GM12878 (cell line): ENCODE measurements at regions of chr7 and their contacts with region 1.

Region 1: DNA sequence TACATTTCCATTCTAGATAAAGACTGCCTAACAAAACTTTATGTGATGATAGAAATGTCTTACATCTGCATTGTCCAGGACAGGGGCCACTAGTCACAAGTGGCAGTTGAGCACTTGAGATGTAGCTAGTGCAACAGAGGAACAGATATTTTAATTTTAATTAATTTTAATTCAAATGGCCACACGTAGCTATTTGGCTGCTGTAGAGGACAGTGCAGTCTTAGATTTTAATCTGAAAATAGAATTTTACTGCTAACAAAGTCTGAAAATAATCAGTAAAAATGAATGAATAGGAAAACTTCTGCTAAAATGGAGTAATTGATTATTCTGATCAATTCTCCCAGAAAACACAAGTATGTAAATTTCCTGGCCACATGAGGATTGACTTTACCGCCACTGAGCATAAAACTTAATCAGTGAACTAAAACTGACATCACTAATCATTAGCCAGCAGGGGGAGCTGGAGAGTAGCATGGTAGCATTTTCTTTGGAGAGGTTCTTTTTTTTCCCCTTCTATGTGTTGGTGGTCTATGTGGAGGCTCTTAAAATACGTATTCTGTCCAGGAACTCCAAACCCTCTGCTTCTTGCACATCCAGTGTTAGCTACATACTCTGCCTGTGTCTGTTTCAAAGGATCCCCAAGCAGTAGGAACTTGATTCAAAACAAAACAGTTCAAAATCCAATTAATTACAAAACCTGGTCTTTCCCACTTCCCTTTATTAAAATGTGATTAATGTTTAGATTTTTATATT is 52.1 kb downstream of the TSPAN12 start:
- DNase-seq: peak; percentile 53
- ATAC-seq: peak; percentile 85
- H3K4me3 ChIP-seq: no peak overlapping the region
- H3K27ac ChIP-seq: no peak overlapping the region
- H3K4me1 ChIP-seq: no peaks in the 10 kb centered on the region
- H3K27me3 ChIP-seq: no peaks in the 10 kb centered on the region
- CTCF ChIP-seq: peak; percentile 74 to 86 (median 82)
- EP300 ChIP-seq: no peak
- POLR2A ChIP-seq: no peak
- RAD21 ChIP-seq: peak; percentile 84

Region 2: GRCh38 chr7:120825576-120825975 is 19.8 kb after region 1 on chr7:
- CTCF ChIA-PET with region 1: interaction called, 25 read pairs
- POLR2A ChIA-PET with region 1: interaction called, 4 read pairs
- RAD21 ChIA-PET with region 1: interaction called, 11 read pairs
- SMC1A ChIA-PET with region 1: interaction called, 13 read pairs
- in situ Hi-C with region 1: no loop called
- intact Hi-C with region 1: loop called (anchors 2 kb)
- DNase-seq: no peak
- ATAC-seq: no peak
- H3K4me3 ChIP-seq: no peak overlapping the region
- H3K27ac ChIP-seq: no peak overlapping the region
- H3K4me1 ChIP-seq: no peaks in the 10 kb centered on the region
- H3K27me3 ChIP-seq: no peaks in the 10 kb centered on the region
- CTCF ChIP-seq: no peak
- EP300 ChIP-seq: no peak
- POLR2A ChIP-seq: no peak
- RAD21 ChIP-seq: no peak

Region 3: DNA sequence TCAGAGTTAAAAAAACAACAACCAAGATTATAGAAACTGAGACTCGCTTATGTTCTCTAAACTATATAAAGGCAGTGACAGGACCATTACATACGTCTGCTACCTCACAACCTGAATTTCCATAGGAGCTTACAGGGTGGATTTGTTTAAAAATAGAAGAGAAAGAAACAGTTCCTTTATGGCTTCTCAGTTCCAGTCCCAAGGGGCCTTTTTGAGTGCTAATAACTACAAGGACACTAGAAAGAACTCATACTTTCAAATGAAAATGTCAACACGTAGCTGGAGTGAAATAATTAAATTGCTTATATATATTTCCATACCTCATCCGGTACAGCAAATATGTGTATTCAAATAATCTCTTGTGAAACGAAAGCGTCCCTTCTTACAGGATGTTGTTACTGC is 32.5 kb after region 1 on chr7:
- CTCF ChIA-PET with region 1: interaction called, 35 read pairs
- POLR2A ChIA-PET with region 1: interaction called, 13 read pairs
- RAD21 ChIA-PET with region 1: interaction called, 21 read pairs
- SMC1A ChIA-PET with region 1: interaction called, 36 read pairs
- in situ Hi-C with region 1: no loop called
- intact Hi-C with region 1: loop called (anchors 2 kb)
- DNase-seq: peak; percentile 68
- ATAC-seq: peak; percentile 76
- H3K4me3 ChIP-seq: no peak overlapping the region
- H3K27ac ChIP-seq: peak overlapping the region; percentile 39
- H3K4me1 ChIP-seq: peaks cover 7% of the 10 kb centered on the region; the same call in 1 of the 2 replicates
- H3K27me3 ChIP-seq: no peaks in the 10 kb centered on the region
- CTCF ChIP-seq: no peak
- EP300 ChIP-seq: peak; percentile 55 to 56; a peak in 3 of 4 replicates
- POLR2A ChIP-seq: no peak
- RAD21 ChIP-seq: no peak

Region 4: GRCh38 chr7:120857588-120858573 is 52.1 kb after region 1 on chr7 and contains the start of gene TSPAN12:
- CTCF ChIA-PET with region 1: interaction called, 59 read pairs
- POLR2A ChIA-PET with region 1: interaction called, 11 read pairs
- RAD21 ChIA-PET with region 1: interaction called, 31 read pairs
- SMC1A ChIA-PET with region 1: interaction called, 73 read pairs
- in situ Hi-C with region 1: no loop called
- intact Hi-C with region 1: loop called (anchors 1 kb)
- DNase-seq: no peak
- ATAC-seq: peak; percentile 81
- H3K4me3 ChIP-seq: peak within 1 kb of the TSS; percentile 70
- H3K27ac ChIP-seq: 0 out of 2 replicates have a peak within 1 kb of the TSS, but pooled peaks have one; percentile 46
- H3K4me1 ChIP-seq: no peaks in the 10 kb centered on the region
- H3K27me3 ChIP-seq: peaks cover 0 to 4% of the 10 kb centered on the region in 2 experiments; a peak in 1 of 4 replicates
- CTCF ChIP-seq: peak; percentile 67 to 79 (median 75); a peak in 5 of 6 replicates
- EP300 ChIP-seq: no peak
- POLR2A ChIP-seq: peak; percentile 66
- RAD21 ChIP-seq: peak; percentile 61
- polyA plus RNA-seq, gene TSPAN12: 0.75 to 1.3 TPM

Region 5: GRCh38 chr7:120927454-120928103 is 121.8 kb after region 1 on chr7:
- CTCF ChIA-PET with region 1: interaction called, 8 read pairs
- POLR2A ChIA-PET with region 1: no interaction called
- RAD21 ChIA-PET with region 1: interaction called, 18 read pairs
- SMC1A ChIA-PET with region 1: interaction called, 23 read pairs
- in situ Hi-C with region 1: no loop called
- intact Hi-C with region 1: no loop called
- DNase-seq: peak; percentile 46
- ATAC-seq: peak; percentile 90
- H3K4me3 ChIP-seq: no peak overlapping the region
- H3K27ac ChIP-seq: peak overlapping the region; percentile 46; the same call in 1 of the 2 replicates
- H3K4me1 ChIP-seq: peaks cover 4% of the 10 kb centered on the region; the same call in 1 of the 2 replicates
- H3K27me3 ChIP-seq: no peaks in the 10 kb centered on the region
- CTCF ChIP-seq: no peak
- EP300 ChIP-seq: 0 out of 4 replicates have a peak, but pooled peaks of 1 of the 2 experiments have one; percentile 40
- POLR2A ChIP-seq: no peak
- RAD21 ChIP-seq: no peak

Region 6: DNA sequence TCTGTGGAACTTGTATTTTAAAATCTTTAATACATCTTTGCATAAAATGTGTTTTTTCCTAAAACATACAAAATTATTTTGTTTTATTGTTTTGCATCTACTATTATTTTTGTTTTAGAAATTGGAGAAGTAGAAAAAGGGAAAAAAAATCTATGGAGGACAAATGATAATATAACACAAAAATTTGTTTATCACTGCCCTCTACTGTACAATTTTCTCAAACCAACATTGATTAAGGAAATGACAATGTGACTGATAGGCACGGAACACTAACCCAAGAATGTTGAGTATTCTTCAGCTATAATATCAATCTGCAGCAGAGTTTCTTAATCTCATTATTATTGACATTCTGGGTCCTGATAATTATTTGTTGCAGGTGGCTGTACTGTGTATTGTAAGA is 135.3 kb after region 1 on chr7:
- CTCF ChIA-PET with region 1: interaction called, 35 read pairs
- POLR2A ChIA-PET with region 1: interaction called, 3 read pairs
- RAD21 ChIA-PET with region 1: interaction called, 10 read pairs
- SMC1A ChIA-PET with region 1: interaction called, 45 read pairs
- in situ Hi-C with region 1: no loop called
- intact Hi-C with region 1: loop called (anchors 1 kb)
- DNase-seq: no peak
- ATAC-seq: peak; percentile 84
- H3K4me3 ChIP-seq: no peak overlapping the region
- H3K27ac ChIP-seq: no peak overlapping the region
- H3K4me1 ChIP-seq: no peaks in the 10 kb centered on the region
- H3K27me3 ChIP-seq: no peaks in the 10 kb centered on the region
- CTCF ChIP-seq: peak in 2 of 3 experiments; percentile 23 to 50; a peak in 2 of 6 replicates
- EP300 ChIP-seq: no peak
- POLR2A ChIP-seq: no peak
- RAD21 ChIP-seq: peak; percentile 48

Region 7: GRCh38 chr7:121081327-121081936 is 275.6 kb after region 1 on chr7:
- CTCF ChIA-PET with region 1: interaction called, 4 read pairs
- POLR2A ChIA-PET with region 1: no interaction called
- RAD21 ChIA-PET with region 1: interaction called, 5 read pairs
- SMC1A ChIA-PET with region 1: interaction called, 3 read pairs
- in situ Hi-C with region 1: no loop called
- intact Hi-C with region 1: loop called (anchors 5 kb)
- DNase-seq: peak; percentile 5
- ATAC-seq: peak; percentile 81
- H3K4me3 ChIP-seq: no peak overlapping the region
- H3K27ac ChIP-seq: no peak overlapping the region
- H3K4me1 ChIP-seq: no peaks in the 10 kb centered on the region
- H3K27me3 ChIP-seq: peaks cover 0 to under 1% of the 10 kb centered on the region in 2 experiments; a peak in 2 of 4 replicates
- CTCF ChIP-seq: peak; percentile 57 to 72 (median 57); a peak in 5 of 6 replicates
- EP300 ChIP-seq: no peak
- POLR2A ChIP-seq: no peak
- RAD21 ChIP-seq: peak; percentile 77